ENCODE measurements at regions of chr3 and their contacts with region 1.

Region 1: GRCh38 chr3:172332256-172333041 is 115.8 kb downstream of the GHSR start:
- DNase-seq: peak; percentile 60
- ATAC-seq: peak; percentile 73
- H3K4me3 ChIP-seq: no peak overlapping the region
- H3K4me3 Mint-ChIP-seq: no peak overlapping the region
- H3K27ac ChIP-seq: no peak overlapping the region
- H3K27ac Mint-ChIP-seq: no peak overlapping the region
- H3K4me1 ChIP-seq: no peaks in the 10 kb centered on the region
- H3K4me1 Mint-ChIP-seq: peaks cover 2% of the 10 kb centered on the region
- H3K27me3 ChIP-seq: no peaks in the 10 kb centered on the region
- H3K27me3 Mint-ChIP-seq: no peaks in the 10 kb centered on the region
- CTCF ChIP-seq: peak; percentile 92

Region 2: GRCh38 chr3:172039436-172040077 is 292.9 kb before region 1 on chr3 and contains the start of gene FNDC3B:
- CTCF ChIA-PET with region 1: interaction called, 14 read pairs
- POLR2A ChIA-PET with region 1: no interaction called
- intact Hi-C with region 1: no loop called
- DNase-seq: peak; percentile 95
- ATAC-seq: peak; percentile 92
- H3K4me3 ChIP-seq: peak within 1 kb of the TSS; percentile 50 to 91 (median 85)
- H3K4me3 Mint-ChIP-seq: peak within 1 kb of the TSS; percentile 97
- H3K27ac ChIP-seq: peak within 1 kb of the TSS; percentile 26 to 80
- H3K27ac Mint-ChIP-seq: peak within 1 kb of the TSS; percentile 92
- H3K4me1 ChIP-seq: peaks cover 11% of the 10 kb centered on the region in 2 donors
- H3K4me1 Mint-ChIP-seq: peaks cover 9% of the 10 kb centered on the region
- H3K27me3 ChIP-seq: peaks cover 0 to 18% (median 10%) of the 10 kb centered on the region in 4 experiments
- H3K27me3 Mint-ChIP-seq: peaks cover 24% of the 10 kb centered on the region
- CTCF ChIP-seq: no peak
- total RNA-seq, gene FNDC3B: 9.2 and 9.6 TPM in 2 replicates

Region 3: DNA sequence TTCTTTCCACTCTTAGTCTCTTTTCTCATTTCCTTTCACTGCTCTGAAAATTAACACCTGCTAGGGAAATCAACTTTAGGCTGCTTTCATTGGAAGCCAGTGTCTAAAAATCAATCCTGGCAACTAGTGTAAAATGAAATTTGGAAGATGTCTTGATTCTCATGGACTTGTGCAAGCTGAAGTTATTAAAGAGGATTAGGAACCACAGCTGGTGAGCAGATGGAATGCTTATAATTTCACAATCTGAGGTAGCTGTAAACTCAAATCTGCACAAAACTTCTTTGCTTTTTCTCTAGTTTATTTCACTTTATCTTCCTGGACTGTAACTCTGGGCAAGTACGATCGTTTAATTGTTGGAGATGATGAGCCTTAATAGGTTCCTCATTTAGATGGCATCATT is 59.8 kb before region 1 on chr3:
- CTCF ChIA-PET with region 1: no interaction called
- POLR2A ChIA-PET with region 1: no interaction called
- intact Hi-C with region 1: no loop called
- DNase-seq: no peak
- ATAC-seq: no peak
- H3K4me3 ChIP-seq: no peak overlapping the region
- H3K4me3 Mint-ChIP-seq: no peak overlapping the region
- H3K27ac ChIP-seq: no peak overlapping the region
- H3K27ac Mint-ChIP-seq: no peak overlapping the region
- H3K4me1 ChIP-seq: no peaks in the 10 kb centered on the region
- H3K4me1 Mint-ChIP-seq: peaks cover 3% of the 10 kb centered on the region
- H3K27me3 ChIP-seq: no peaks in the 10 kb centered on the region
- H3K27me3 Mint-ChIP-seq: no peaks in the 10 kb centered on the region
- CTCF ChIP-seq: no peak

Region 4: DNA sequence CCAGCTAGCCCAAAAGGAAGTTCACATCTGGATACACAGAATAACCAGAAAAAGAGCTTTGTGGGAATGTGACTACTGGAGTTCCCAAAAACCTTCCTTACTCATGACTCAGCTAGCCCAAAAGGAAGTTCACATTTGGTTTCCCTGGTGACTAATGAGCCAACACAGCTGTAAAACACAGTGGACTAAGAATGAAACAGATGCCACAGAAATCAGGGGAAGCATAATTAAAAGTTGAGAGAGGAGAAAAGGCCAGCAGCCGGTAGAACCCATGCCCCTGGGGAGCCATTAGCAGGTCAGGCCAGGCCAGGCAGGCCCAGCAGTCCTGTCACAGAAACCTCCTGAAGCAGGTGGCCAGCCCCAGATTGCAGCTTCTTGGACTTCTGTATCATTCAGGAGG is 14.5 kb before region 1 on chr3:
- CTCF ChIA-PET with region 1: interaction called, 22 read pairs
- POLR2A ChIA-PET with region 1: no interaction called
- intact Hi-C with region 1: no loop called
- DNase-seq: no peak
- ATAC-seq: no peak
- H3K4me3 ChIP-seq: no peak overlapping the region
- H3K4me3 Mint-ChIP-seq: no peak overlapping the region
- H3K27ac ChIP-seq: no peak overlapping the region
- H3K27ac Mint-ChIP-seq: no peak overlapping the region
- H3K4me1 ChIP-seq: no peaks in the 10 kb centered on the region
- H3K4me1 Mint-ChIP-seq: no peaks in the 10 kb centered on the region
- H3K27me3 ChIP-seq: no peaks in the 10 kb centered on the region
- H3K27me3 Mint-ChIP-seq: no peaks in the 10 kb centered on the region
- CTCF ChIP-seq: no peak

Region 5: DNA sequence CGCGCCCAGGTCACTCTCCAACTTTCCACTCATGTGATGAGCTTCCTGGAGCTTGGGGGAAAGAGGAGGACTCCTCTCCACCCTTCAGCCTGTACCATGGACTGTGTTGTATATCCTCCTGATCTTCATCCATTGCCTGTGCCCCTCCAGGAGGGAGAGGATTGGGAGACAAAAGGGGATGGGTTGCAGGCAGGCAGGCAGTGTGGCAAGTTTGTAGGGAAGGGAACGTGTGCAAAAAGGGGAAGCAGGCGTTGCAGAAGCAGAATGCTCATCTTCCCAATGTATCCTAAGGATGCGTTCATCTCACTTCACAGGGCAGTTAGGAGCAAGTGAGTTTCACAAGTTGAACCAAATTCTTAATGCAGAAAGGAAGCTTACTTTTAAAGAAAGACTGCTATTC is 143.9 kb after region 1 on chr3:
- CTCF ChIA-PET with region 1: interaction called, 4 read pairs
- POLR2A ChIA-PET with region 1: no interaction called
- intact Hi-C with region 1: loop called (anchors 1 kb)
- DNase-seq: no peak
- ATAC-seq: no peak
- H3K4me3 ChIP-seq: no peak overlapping the region
- H3K4me3 Mint-ChIP-seq: peak overlapping the region; percentile 70
- H3K27ac ChIP-seq: no peak overlapping the region
- H3K27ac Mint-ChIP-seq: no peak overlapping the region
- H3K4me1 ChIP-seq: no peaks in the 10 kb centered on the region
- H3K4me1 Mint-ChIP-seq: peaks cover 9% of the 10 kb centered on the region
- H3K27me3 ChIP-seq: no peaks in the 10 kb centered on the region
- H3K27me3 Mint-ChIP-seq: no peaks in the 10 kb centered on the region
- CTCF ChIP-seq: no peak

Region 6: DNA sequence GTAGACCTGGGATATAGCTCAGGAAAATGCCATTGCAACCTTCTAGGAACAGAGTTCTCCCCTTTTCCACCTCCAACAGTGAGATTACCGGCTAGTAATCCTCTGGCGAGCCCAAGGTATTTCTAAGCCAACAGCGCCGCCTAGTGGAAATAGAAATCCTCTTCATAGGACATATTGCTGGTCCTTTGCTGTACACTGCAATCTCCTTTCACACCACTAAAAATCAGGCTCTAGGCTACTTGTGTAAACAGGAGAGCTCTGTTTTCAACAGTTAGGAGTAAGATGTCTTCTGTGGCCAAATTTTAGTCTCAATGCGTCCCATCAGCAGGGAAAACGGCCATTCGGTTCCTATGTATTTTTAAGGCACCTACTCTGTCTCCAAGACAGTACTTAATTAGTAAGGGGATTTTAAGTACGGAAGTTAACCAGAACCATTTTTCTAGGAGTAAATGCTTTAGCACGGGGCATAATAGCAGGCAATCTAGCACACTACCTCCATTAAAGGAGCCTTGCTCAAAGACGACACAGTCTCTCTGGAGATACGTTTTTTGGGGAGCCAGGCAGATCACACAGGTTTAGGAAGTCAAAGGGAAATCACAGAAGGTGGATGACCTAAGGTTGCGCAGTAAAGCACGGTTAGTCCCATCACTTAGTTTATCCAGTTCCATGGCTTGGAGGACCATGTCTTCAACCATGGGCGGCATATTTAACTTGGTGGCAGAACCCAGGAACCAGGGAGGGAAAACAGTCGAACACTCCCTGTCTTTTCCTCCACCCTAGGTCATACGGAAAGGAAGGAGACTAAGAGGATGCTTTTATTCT is 334.6 kb after region 1 on chr3:
- CTCF ChIA-PET with region 1: interaction called, 38 read pairs
- POLR2A ChIA-PET with region 1: no interaction called
- intact Hi-C with region 1: loop called (anchors 1 kb)
- DNase-seq: peak; percentile 70
- ATAC-seq: peak; percentile 76
- H3K4me3 ChIP-seq: no peak overlapping the region
- H3K4me3 Mint-ChIP-seq: no peak overlapping the region
- H3K27ac ChIP-seq: no peak overlapping the region
- H3K27ac Mint-ChIP-seq: no peak overlapping the region
- H3K4me1 ChIP-seq: peaks cover 0 to 4% of the 10 kb centered on the region in 2 donors
- H3K4me1 Mint-ChIP-seq: peaks cover 10% of the 10 kb centered on the region
- H3K27me3 ChIP-seq: no peaks in the 10 kb centered on the region
- H3K27me3 Mint-ChIP-seq: no peaks in the 10 kb centered on the region
- CTCF ChIP-seq: peak; percentile 77